ENCODE measurements at regions of chr19 and their contacts with region 1.

Region 1: GRCh38 chr19:6220418-6221221 is 59.2 kb downstream of the MLLT1 start:
- DNase-seq: no peak
- H3K4me3 ChIP-seq: no peak overlapping the region
- CTCF ChIP-seq: no peak

Region 2: DNA sequence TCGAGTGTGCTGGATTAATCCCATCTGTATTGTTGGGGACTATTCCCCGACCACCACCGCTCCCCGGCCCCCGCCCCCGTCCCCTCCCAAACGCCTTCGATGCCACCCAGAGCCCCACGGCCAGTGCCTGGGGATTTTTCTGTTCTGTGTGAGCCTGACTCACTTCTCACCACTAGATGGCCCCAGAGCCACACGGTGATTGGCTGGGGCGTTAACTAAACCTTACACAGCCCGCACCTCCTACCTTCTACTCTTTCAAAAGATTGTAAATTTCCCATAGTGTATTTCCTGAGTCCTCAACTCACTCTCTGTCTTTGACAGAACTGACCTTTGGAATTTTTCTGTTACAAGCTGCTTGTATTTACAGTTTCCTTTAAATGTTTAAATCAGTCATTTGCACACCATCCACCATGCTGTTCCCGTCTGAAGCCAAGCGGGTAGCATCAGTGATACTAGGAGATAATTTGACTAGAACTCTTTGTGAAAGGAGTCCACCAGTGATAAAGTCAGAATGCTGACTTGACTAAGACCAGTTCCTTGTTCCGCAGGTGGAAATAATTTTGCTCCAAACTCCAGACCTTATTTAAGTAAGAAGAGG is 171.7 kb before region 1 on chr19:
- in situ Hi-C with region 1: loop called (anchors 10 kb)
- DNase-seq: no peak
- H3K4me3 ChIP-seq: no peak overlapping the region
- CTCF ChIP-seq: peak; percentile 87

Region 3: GRCh38 chr19:6138066-6138465 is 82.6 kb before region 1 on chr19:
- in situ Hi-C with region 1: loop called (anchors 10 kb)
- DNase-seq: no peak
- H3K4me3 ChIP-seq: no peak overlapping the region
- CTCF ChIP-seq: no peak